Heart right ventricle (tissue), 16 donors: ENCODE measurements at regions of chr17 and their contacts with region 1.

Region 1: DNA sequence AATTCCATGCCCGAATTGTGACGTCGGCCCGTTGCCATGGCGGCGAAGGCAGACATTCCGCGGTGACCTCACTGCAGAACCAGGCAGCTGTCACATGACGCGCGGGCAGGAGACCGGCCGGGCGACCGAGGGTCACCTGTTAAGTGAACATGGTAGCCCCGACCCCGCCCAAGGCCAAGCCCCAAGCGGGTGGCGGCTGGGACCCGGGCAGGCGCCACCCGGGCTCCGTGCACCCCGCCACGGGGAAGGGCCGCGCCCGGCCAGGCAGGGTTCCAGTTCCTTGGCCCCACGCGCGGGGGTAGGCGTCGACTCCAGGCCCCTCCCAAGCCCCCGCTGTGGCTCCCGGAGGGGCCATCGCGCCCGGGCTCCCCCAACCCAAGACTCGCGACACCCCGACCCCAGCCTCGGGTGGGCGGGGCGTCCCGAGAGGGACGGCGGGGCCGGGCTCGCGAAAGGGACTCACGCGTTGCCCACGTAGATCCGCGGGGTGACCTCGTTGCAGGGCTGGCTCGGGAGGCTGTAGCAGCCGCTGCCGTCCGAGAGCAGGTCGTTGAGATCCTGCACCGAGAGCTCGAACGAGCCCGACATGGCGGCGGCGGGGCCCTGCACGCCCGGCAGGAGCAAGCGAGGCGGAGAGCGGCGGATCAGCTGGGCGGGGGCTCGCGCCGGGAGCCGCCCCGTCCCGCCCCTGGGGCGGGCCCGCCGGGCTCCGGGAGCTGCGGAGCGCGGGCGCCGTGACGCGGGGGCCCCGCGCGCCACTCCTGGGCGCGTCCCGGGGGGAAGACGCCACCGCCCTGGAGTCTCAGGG is at the start of gene DUSP3:
- DNase-seq: peak; percentile 95 to 96
- ATAC-seq: peak; percentile 87 to 96 (median 90)
- H3K4me3 ChIP-seq: peak within 1 kb of the TSS; percentile 70 to 100 (median 93)
- H3K27ac ChIP-seq: peak within 1 kb of the TSS; percentile 96 to 100 (median 100)
- H3K4me1 ChIP-seq: peaks cover 2 to 69% (median 41%) of the 10 kb centered on the region in 9 donors
- H3K27me3 ChIP-seq: no peaks in the 10 kb centered on the region
- CTCF ChIP-seq: peak in 1 of 9 donors; percentile 6
- total RNA-seq, gene DUSP3: 222 to 359 (median 297) TPM

Region 2: DNA sequence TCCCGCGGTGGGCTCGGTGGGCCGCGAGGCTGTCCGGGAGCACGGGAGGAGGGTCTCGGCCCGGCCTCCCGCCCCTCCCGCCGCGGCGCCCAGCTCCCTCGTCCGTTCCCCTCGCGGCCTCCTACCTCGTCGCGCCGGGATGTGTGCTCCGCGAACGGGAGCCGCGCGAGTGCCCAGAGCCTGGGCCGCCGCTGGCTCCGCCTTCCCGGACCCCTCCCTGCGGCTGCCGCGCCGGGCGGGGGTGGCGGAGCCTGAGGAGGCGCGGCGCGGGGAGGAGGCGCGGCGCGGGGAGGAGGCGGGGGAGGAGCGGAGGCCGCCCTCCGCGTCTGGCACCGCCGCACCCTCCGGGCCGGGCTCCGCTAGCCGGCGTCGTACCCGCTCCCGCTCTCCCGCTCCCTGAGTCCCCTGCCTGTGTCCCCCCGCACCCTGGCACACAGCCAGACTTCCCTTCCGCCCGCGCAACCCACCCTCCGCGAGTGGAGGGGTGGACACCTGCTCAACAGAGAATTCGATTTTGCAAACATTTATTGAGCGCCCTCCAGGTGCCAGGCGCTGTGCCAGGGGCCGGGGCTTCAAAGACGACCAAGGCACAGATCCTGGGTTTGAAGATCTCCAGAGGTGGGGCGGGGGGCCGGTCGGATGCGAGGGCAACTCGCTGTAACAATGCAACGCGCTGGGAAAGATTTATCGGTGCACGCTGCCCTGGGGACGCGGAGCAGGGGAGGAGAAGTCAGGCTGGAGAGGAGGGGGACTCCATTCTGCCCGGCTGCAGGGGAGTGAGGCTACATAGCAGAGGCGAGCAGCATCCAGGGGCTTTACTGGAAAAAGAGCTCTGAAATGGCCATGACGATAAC is 54.7 kb after region 1 on chr17 and contains the start of gene MPP3:
- intact Hi-C with region 1: loop called in 6 of 10 experiments (anchors 2 to 5 kb)
- DNase-seq: peak; percentile 58 to 76
- ATAC-seq: peak; percentile 68 to 93 (median 80)
- H3K4me3 ChIP-seq: peak within 1 kb of the TSS; percentile 56 to 85 (median 72)
- H3K27ac ChIP-seq: peak within 1 kb of the TSS; percentile 68 to 91 (median 85)
- H3K4me1 ChIP-seq: peaks cover 2 to 49% (median 27%) of the 10 kb centered on the region in 9 donors
- H3K27me3 ChIP-seq: peaks cover 0 to 25% (median 0%) of the 10 kb centered on the region in 7 donors
- CTCF ChIP-seq: no peak
- total RNA-seq, gene MPP3: 16.6 to 84.2 (median 26.6) TPM